ENCODE measurements at regions of chr6 and their contacts with region 1.

Region 1: GRCh38 chr6:136792410-136793262 is at the start of gene MAP3K5:
- DNase-seq: peak; percentile 83 to 93
- H3K4me3 ChIP-seq: peak within 1 kb of the TSS; percentile 97
- H3K27ac ChIP-seq: peak within 1 kb of the TSS; percentile 87
- H3K4me1 ChIP-seq: peaks cover 39% of the 10 kb centered on the region
- H3K27me3 ChIP-seq: no peaks in the 10 kb centered on the region
- CTCF ChIP-seq: peak; percentile 91
- total RNA-seq, gene MAP3K5: 10.4 and 10.9 TPM in 2 replicates

Region 2: GRCh38 chr6:136289579-136290409 is 502.8 kb before region 1 on chr6 and contains the start of gene BCLAF1:
- CTCF ChIA-PET with region 1: no interaction called
- POLR2A ChIA-PET with region 1: interaction called, 6 read pairs
- intact Hi-C with region 1: loop called (anchors 10 kb)
- DNase-seq: peak; percentile 98 to 99
- H3K4me3 ChIP-seq: peak within 1 kb of the TSS; percentile 93
- H3K27ac ChIP-seq: peak within 1 kb of the TSS; percentile 97
- H3K4me1 ChIP-seq: peaks cover 51% of the 10 kb centered on the region
- H3K27me3 ChIP-seq: no peaks in the 10 kb centered on the region
- CTCF ChIP-seq: no peak
- total RNA-seq, gene BCLAF1: 76.4 and 109 TPM in 2 replicates

Region 3: DNA sequence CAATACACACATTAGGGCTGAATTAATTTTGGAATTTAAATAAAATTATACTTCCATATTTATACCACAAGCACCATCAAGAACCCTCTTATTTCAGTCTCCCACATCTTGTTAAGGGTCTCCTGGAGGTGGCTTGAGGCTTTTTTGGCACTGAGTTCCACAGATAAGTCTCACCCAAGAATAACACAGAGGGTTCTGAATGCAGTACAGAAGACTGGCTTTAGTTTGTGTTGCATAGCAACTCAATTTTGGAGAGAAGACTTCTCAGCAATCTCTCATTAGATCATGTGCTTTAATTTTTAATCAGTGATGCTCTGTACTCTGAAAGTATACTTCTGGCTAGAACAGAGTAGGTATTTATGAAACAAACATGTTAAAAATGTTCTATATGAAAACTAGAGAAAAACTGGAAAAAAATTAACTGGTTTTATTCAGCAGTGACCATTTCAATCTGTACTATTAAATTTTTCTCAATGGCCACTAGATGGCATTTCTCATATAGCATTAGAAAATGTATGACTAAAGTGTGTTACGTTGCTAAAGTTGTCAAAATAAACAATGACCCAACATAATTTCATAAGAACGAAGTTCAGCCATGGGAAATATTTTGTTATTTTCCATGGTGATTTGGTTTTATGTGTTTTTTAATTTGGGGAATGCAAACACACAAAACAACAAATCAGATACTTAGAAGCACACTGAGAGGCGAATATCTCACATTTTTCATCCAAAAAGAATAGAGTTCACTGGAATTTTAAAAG is 209.7 kb before region 1 on chr6:
- CTCF ChIA-PET with region 1: interaction called, 5 read pairs
- POLR2A ChIA-PET with region 1: no interaction called
- intact Hi-C with region 1: loop called (anchors 1 kb)
- DNase-seq: peak in 1 of 2 experiments; percentile 96
- H3K4me3 ChIP-seq: no peak overlapping the region
- H3K27ac ChIP-seq: peak overlapping the region; percentile 66
- H3K4me1 ChIP-seq: peaks cover 25% of the 10 kb centered on the region
- H3K27me3 ChIP-seq: no peaks in the 10 kb centered on the region
- CTCF ChIP-seq: peak; percentile 92

Region 4: GRCh38 chr6:136643850-136644596 is 148.6 kb before region 1 on chr6:
- CTCF ChIA-PET with region 1: interaction called, 102 read pairs
- POLR2A ChIA-PET with region 1: interaction called, 9 read pairs
- intact Hi-C with region 1: loop called (anchors 1 kb)
- DNase-seq: peak; percentile 85 to 90
- H3K4me3 ChIP-seq: no peak overlapping the region
- H3K27ac ChIP-seq: no peak overlapping the region
- H3K4me1 ChIP-seq: peaks cover 9% of the 10 kb centered on the region
- H3K27me3 ChIP-seq: no peaks in the 10 kb centered on the region
- CTCF ChIP-seq: peak; percentile 99

Region 5: DNA sequence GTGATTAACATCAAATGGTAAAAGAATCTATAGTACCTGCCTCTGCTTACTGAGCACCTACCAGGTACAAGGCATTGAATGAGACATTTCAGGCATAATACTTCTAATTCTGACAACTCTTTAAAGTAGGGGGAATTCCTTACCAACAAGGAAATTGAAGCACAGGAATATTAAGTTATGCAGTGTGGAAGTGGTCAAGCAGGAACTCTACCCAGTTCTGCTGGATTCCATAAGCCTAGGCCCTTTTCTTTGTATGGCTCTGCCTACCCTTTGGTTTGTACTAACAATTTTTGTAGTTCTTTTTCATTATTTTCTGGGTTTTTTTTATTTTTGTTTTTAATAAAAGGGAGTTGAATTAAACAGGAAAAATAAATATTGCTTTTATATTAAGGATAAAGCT is 114.8 kb before region 1 on chr6:
- CTCF ChIA-PET with region 1: interaction called, 7 read pairs
- POLR2A ChIA-PET with region 1: interaction called, 7 read pairs
- intact Hi-C with region 1: loop called (anchors 2 kb)
- DNase-seq: peak; percentile 54 to 96
- H3K4me3 ChIP-seq: peak overlapping the region; percentile 37; the same call in 1 of the 2 replicates
- H3K27ac ChIP-seq: peak overlapping the region; percentile 65
- H3K4me1 ChIP-seq: peaks cover 54% of the 10 kb centered on the region
- H3K27me3 ChIP-seq: no peaks in the 10 kb centered on the region
- CTCF ChIP-seq: no peak

Region 6: DNA sequence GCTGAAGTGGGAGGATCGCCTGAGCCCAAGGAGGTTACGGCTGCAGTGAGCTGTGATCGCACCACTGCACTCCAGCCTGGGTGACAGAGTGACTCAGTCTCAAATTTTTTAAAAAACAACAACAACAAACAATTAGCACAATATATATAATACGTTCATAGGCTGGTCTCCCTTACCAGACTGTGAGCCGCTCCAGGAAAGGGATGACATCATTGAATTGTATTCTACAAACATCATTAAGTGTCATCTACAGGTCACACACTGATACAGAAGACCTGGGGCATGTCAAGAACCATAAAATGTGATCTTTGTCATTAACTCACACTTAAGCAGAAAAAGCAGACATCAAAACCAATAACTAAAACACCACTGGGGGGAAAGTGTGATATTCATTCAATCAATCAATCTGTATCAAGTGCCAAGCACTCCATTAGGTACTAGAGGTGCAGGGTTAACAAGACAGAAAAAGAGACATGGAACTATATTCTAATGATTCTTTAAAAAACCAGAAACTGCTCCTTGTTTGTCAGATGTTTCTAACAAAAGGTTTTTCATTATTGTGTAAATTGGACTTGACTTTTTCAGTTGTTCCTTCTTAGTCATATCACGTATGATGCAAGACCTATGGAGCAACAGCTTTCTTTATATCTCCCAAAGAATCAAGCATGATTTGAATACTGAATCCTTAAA is 18.1 kb before region 1 on chr6:
- CTCF ChIA-PET with region 1: interaction called, 6 read pairs
- POLR2A ChIA-PET with region 1: interaction called, 5 read pairs
- intact Hi-C with region 1: loop called (anchors 2 kb)
- DNase-seq: peak in 1 of 2 experiments; percentile 94
- H3K4me3 ChIP-seq: peak overlapping the region; percentile 52; the same call in 1 of the 2 replicates
- H3K27ac ChIP-seq: peak overlapping the region; percentile 97
- H3K4me1 ChIP-seq: peaks cover 58% of the 10 kb centered on the region
- H3K27me3 ChIP-seq: no peaks in the 10 kb centered on the region
- CTCF ChIP-seq: 0 out of 2 replicates have a peak, but pooled peaks have one; percentile 1